ENCODE measurements at regions of chr9 and their contacts with region 1.

Region 1: DNA sequence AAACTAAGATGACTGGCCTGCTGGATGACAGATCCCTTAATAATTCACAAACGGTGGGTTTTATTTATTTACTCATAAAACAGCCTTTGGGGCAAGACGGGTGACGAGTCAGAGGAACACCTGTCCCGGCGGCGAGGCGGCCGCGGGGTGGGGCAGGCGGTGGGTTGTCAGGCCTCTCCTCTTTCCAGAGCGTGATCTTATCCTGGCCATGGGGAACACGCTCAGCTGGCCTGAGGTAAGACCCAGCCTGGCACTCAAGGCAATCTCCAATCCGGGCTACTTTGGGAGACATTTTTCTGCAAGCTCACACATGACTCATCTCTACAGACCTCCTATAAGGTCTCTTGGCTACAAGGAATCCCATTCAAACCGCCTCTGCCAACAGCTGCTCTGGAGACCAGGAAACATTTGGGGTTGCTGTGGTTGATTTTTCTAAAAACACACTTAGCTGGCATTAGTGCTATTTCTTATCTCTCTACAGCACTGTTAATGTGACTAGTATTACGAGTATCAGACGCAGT is 6.3 kb downstream of the RAPGEF1 start:
- DNase-seq: no peak
- H3K4me3 ChIP-seq: no peak overlapping the region
- H3K27ac ChIP-seq: peak overlapping the region; percentile 38 to 80 (median 75)
- H3K4me1 ChIP-seq: peaks cover 0 to 91% (median 82%) of the 10 kb centered on the region in 4 donors
- H3K27me3 ChIP-seq: no peaks in the 10 kb centered on the region
- CTCF ChIP-seq: no peak
- EP300 ChIP-seq: no peak
- POLR2A ChIP-seq: no peak

Region 2: DNA sequence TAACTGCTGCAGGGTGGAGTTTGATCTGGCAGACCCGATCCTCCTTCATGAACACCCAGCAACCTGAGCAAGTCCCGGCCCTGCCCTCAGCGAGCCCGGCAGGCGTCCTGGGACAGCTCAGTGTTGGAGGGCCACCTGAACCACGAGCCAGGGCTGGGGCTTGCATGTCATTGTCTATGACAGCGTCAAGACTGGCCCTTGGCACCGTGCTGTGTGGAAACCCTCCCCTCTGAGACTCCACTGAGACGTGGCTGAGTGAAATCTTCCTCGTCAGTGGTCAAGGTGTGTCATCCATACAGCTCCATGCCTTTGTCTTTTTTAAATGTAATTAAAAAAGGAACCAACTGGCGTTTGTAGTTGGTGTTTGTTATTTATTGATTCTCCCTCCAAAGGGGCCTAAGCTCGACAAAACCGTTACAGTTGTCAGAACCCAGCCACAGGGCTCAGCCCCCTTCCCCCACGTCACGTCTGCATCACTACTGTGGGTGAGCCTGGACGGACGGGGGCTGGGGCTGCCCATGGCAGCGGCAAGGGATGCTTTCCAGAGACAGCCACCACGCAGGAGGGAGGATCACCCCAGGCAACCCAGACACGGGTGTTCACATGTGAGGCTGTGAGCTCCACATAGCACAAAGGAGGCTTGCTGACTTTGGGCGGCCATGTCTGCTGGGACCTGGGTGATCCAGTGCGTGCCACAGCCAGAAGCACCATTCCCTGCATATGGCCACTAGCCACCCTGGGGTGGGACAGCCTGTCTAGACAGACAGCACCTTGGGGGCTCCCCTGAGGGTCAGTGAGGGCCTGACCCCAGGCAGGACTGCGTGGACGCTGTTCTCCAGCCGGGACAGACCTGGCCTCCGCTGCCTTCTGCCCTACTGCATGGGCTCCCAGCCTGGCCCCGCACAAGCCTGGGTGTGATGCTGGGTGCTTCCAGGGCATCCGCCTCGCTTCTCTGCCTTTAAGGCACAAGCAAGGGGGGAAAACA is 209.9 kb before region 1 on chr9:
- intact Hi-C with region 1: no loop called
- DNase-seq: peak; percentile 54
- H3K4me3 ChIP-seq: no peak overlapping the region
- H3K27ac ChIP-seq: no peak overlapping the region
- H3K4me1 ChIP-seq: peaks cover 0 to 5% (median 4%) of the 10 kb centered on the region in 4 donors
- H3K27me3 ChIP-seq: no peaks in the 10 kb centered on the region
- CTCF ChIP-seq: no peak
- EP300 ChIP-seq: no peak
- POLR2A ChIP-seq: no peak

Region 3: DNA sequence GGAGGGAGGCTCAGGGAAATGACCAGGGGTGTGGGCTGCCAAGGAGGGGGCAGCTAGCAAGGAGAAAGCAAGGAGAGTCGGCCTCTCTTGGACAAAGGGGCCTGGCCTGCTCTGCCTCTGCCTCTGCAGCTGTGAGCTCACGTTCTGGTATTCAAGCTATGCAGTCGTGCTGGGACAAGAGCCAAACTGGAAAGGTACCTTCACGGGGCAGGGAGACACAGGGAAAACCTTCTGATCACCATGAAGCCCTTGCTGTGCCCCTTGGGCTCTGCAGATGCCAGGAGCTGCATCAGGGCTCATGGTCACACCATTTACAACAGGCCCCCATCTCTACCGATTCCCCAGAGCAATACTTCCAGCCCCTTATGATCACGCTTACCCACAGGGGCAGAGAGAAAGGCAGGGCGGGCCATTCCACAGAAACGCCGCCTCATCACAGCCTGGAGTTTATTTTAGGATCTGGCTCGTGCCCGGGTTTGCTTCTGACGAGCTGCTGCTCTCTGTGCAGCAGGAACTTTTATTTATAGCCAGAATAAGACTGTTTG is 125.0 kb before region 1 on chr9:
- intact Hi-C with region 1: loop called (anchors 2 kb)
- DNase-seq: peak; percentile 93
- H3K4me3 ChIP-seq: peak overlapping the region in 3 of 4 donors; percentile 0 to 25 (median 8)
- H3K27ac ChIP-seq: peak overlapping the region; percentile 79 to 93 (median 85)
- H3K4me1 ChIP-seq: peaks cover 0 to 53% (median 43%) of the 10 kb centered on the region in 4 donors
- H3K27me3 ChIP-seq: no peaks in the 10 kb centered on the region
- CTCF ChIP-seq: no peak
- EP300 ChIP-seq: peak in 1 of 4 donors; percentile 23
- POLR2A ChIP-seq: no peak

Region 4: DNA sequence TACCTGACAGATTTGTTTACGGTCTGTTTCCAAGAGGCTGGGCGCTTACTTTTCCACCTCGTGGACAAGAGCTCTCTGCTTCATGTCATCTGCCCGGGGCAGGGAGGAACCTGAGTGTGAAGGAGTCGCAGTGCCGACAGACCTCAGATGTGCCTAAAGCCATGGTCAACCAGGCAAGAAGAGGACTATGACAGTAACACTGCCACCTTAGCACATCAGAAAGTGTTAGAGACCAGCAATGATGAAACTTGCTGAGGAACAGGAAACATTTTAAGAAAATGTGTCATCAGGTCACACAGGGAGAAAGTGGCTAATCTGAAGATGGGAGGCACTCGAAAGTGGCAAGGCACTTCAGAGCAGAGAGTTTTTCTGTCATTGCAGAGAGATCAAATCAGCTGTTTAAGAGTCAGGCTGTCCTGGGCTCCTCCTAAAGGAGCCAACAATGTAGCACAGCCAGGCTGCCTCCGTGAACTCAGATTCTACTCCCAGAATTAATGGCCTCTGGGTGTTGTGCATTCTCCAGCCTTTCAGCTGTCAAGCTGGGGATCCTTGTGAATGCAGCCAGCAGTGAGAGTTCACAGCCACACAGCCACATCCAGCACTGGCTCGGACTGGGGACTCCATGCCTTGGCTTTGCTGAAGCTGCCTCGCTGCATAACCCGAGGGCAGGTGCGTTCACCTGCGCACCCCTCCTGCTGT is 88.4 kb before region 1 on chr9:
- intact Hi-C with region 1: loop called (anchors 1 kb)
- DNase-seq: no peak
- H3K4me3 ChIP-seq: no peak overlapping the region
- H3K27ac ChIP-seq: peak overlapping the region; percentile 8 to 66 (median 50)
- H3K4me1 ChIP-seq: peaks cover 0 to 58% (median 43%) of the 10 kb centered on the region in 4 donors
- H3K27me3 ChIP-seq: no peaks in the 10 kb centered on the region
- CTCF ChIP-seq: no peak
- EP300 ChIP-seq: no peak
- POLR2A ChIP-seq: no peak

Region 5: GRCh38 chr9:131678499-131679111 is 55.0 kb before region 1 on chr9:
- intact Hi-C with region 1: loop called (anchors 5 kb)
- DNase-seq: peak; percentile 90
- H3K4me3 ChIP-seq: no peak overlapping the region
- H3K27ac ChIP-seq: peak overlapping the region; percentile 70 to 88 (median 78)
- H3K4me1 ChIP-seq: peaks cover 0 to 74% (median 59%) of the 10 kb centered on the region in 4 donors
- H3K27me3 ChIP-seq: no peaks in the 10 kb centered on the region
- CTCF ChIP-seq: no peak
- EP300 ChIP-seq: peak in 1 of 4 donors; percentile 50
- POLR2A ChIP-seq: no peak

Measured in sigmoid colon (tissue), 7 donors.